BJ (cell line): ENCODE measurements at regions of chr14 and their contacts with region 1.

Region 1: DNA sequence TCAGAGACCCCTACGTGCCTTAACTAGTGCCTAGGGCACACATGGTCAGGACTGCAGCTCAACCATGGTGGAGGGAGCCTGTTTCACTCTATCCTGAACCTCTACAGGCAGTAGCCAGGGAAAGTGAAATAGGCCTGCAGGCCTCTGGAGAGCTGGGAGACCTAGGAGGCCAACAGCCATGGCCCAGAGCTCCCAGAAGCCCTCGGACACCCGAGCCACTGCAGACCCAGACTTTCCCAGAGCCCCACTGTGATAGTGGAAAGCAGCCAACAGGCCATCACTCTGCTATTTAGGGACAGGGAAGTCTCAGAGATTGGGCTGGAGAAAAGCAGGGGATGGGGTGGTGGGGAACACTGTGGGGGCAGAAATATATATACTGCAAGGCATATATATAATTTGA is 56.5 kb upstream of the ZFP36L1 start:
- DNase-seq: no peak
- H3K4me3 ChIP-seq: no peak overlapping the region
- H3K27me3 ChIP-seq: no peaks in the 10 kb centered on the region
- CTCF ChIP-seq: no peak

Region 2: GRCh38 chr14:67999693-68000384 is 849.6 kb before region 1 on chr14:
- CTCF ChIA-PET with region 1: no interaction called
- POLR2A ChIA-PET with region 1: interaction called, 25 read pairs
- DNase-seq: peak; percentile 76
- H3K4me3 ChIP-seq: no peak overlapping the region
- H3K27me3 ChIP-seq: no peaks in the 10 kb centered on the region
- CTCF ChIP-seq: no peak